ENCODE measurements at regions of chr12 and their contacts with region 1.

Region 1: DNA sequence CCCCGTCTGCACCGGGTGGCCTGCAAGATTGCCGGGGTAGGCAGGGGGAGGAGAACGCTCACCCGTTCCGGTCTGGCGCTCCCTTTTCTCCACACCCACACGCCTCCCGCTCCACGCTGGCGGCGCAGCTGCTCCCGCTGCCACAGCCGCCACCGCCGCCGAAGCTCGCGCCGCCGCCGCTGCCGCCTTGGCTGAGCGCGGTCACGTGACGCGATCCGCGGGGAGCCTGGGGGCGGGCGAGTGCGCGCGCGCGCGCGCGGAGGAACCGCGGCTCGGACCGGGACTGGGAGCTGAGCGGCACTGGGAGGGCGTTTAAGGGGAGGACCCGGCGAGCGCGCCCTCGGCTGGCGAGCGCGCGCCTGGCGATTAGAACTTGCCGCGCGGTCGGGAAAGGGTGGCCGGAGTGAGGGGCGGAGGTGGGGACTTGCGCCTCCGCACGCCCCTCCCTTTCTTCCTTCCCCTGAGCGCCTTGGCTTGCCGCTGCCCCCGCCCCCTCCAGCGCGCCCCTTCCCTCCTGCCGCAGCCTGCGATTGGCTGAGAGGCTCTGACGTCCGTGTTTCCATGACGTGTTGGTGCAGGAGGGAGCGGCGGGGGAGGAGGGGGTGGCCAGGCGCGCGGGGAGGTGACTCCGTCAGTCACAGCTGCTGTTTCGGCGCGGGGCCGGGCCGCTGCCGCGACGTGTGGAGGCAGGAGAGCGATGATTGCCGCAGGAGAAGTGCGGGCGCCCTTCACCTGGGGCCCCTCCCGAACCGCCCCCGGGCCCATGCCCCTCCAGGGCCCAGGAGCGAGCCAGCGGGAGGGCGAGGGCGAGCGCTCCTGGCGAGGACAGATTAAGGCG is 738 bp upstream of the ATP2B1 start:
- DNase-seq: peak; percentile 98 to 99
- H3K4me3 ChIP-seq: peak overlapping the region; percentile 82 to 91 (median 89)
- H3K27ac ChIP-seq: peak overlapping the region; percentile 95 to 97
- H3K4me1 ChIP-seq: no peaks in the 10 kb centered on the region
- H3K27me3 ChIP-seq: no peaks in the 10 kb centered on the region
- CTCF ChIP-seq: no peak
- POLR2A ChIP-seq: peak; percentile 92

Region 2: DNA sequence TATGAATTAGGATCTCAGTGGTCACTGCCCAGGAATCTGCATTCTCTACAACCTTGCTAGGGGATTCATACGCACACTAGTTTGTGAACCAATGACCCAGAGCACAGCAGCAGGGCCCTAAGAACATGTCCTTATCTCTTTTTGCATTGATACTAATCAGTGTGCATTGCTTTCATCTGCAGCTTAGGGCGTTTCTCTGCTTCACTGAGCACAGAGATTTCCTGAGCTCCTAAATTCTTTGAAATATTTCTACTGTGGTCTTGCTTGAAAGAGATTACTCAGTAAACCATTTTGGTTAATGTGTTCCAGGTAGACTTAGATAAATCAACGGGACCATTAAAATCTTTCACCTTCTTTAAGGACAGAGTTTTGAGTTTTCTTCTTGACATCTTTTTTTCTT is 777.8 kb before region 1 on chr12:
- intact Hi-C with region 1: no loop called
- DNase-seq: no peak
- H3K4me3 ChIP-seq: no peak overlapping the region
- H3K27ac ChIP-seq: no peak overlapping the region
- H3K4me1 ChIP-seq: no peaks in the 10 kb centered on the region
- H3K27me3 ChIP-seq: no peaks in the 10 kb centered on the region
- CTCF ChIP-seq: no peak
- POLR2A ChIP-seq: no peak

Region 3: DNA sequence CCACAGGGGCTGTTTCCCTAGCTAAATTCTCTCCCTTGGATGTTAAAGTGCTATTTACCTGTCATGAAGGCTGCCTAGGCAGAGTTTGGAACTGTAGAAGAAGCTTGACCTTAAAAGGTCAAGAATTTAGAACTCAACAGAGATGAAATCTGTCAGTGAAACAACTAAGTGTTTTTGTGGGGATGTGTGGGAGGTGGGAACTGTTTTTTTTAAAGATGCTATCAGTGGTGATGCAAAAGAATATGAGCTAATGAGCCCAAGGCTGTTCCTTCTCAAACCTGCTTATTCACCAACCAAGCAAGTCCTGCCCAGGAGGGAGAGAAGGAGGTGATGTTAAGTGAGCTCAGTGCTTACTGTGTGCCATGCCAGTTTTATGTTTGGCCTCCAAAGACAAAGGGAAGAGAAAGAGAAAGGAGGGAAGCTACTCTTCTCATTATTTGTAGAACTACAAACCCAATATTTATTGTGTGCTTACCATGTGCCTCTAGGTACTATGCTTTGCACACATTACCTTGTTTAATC is 142.7 kb before region 1 on chr12:
- intact Hi-C with region 1: loop called (anchors 10 kb)
- DNase-seq: peak in 1 of 2 donors; percentile 68
- H3K4me3 ChIP-seq: no peak overlapping the region
- H3K27ac ChIP-seq: peak overlapping the region; percentile 69 to 74
- H3K4me1 ChIP-seq: no peaks in the 10 kb centered on the region
- H3K27me3 ChIP-seq: no peaks in the 10 kb centered on the region
- CTCF ChIP-seq: no peak
- POLR2A ChIP-seq: no peak

Region 4: DNA sequence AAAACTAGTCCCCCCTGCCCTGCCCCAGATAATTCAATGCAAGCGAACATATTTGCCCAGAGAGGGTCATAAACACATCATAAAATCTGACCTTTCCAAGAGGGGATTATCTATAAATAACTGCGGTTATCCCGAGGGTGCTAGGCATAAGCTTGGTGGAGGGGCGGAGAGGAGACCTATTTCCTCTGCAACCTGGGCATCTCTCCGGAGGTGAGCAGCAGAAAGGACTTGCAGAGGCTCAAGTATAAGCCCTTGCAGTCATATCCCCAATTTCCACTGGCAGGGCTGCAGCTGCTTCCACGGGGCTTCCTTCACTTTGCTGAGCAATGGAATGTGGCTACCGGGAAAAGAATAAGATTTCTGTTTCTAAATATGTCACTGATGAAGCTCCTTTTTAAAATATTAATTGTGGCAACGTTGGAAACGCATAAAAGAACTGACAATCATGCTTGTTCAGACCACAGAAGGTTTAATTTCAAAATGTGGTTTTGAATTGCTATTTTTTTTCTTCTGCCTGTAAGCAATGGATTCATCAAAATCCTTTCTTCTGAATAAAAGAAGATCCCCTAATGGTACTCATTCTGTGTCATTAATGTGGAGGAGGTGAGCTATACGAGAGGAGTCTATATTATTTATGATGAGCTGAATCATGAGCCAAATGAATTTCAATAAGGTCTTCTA is 268.2 kb after region 1 on chr12:
- intact Hi-C with region 1: loop called (anchors 5 kb)
- DNase-seq: no peak
- H3K4me3 ChIP-seq: no peak overlapping the region
- H3K27ac ChIP-seq: no peak overlapping the region
- H3K4me1 ChIP-seq: no peaks in the 10 kb centered on the region
- H3K27me3 ChIP-seq: no peaks in the 10 kb centered on the region
- CTCF ChIP-seq: no peak
- POLR2A ChIP-seq: no peak

Region 5: GRCh38 chr12:91172096-91172495 is 1462.7 kb after region 1 on chr12:
- intact Hi-C with region 1: loop called (anchors 5 kb)
- DNase-seq: no peak
- H3K4me3 ChIP-seq: peak overlapping the region in 2 of 3 donors; percentile 16 to 53
- H3K27ac ChIP-seq: no peak overlapping the region
- H3K4me1 ChIP-seq: no peaks in the 10 kb centered on the region
- H3K27me3 ChIP-seq: no peaks in the 10 kb centered on the region
- CTCF ChIP-seq: no peak
- POLR2A ChIP-seq: no peak

Measured in breast epithelium (tissue), 4 donors.